ENCODE measurements at regions of chr3 and their contacts with region 1.

Region 1: DNA sequence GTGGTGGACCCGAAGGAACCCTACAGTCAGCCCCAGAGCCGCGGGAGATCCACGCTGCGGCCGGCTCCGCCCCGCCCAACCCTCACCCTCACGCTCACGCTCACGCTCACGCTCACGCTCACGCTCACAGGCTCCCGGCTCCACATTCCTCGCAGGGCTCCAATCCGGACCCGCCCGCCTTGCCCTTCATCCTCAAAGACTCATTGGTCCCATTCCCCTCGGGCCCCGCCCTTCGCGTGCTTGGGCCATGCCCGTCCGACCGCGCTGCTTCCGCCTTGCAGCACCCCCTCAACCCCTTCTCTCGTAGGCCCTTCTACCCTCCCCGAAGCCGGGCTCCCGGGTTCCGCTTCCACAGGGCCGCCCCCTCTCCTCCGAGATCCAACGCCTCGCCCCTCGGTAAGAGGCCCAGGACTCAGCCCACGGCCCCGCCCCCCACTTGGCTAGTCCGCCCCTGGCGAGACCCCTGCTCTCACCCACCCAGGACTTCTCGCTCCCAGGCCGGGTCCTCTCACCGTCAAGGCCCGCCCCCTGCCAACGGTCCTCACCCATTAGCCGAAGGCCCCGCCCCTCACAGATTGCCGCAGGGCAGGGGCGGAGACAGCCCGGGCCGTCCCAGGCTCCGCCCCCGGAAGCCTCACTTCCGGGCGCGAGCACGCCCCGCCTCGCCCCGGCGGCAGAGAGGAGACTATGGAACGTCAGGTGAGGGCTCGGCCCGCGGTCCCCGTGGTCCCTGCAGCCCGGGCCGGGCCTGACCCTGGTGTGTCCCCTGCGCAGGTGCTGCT is at the start of gene APEH:
- DNase-seq: peak; percentile 97
- H3K4me3 Mint-ChIP-seq: peak within 1 kb of the TSS; percentile 91
- H3K27ac Mint-ChIP-seq: peak within 1 kb of the TSS; percentile 97
- H3K4me1 Mint-ChIP-seq: peaks cover 16% of the 10 kb centered on the region
- H3K27me3 Mint-ChIP-seq: no peaks in the 10 kb centered on the region
- total RNA-seq, gene APEH: 111 and 113 TPM in 2 replicates

Region 2: GRCh38 chr3:49469936-49470713 is 203.8 kb before region 1 on chr3 and contains the start of gene DAG1:
- intact Hi-C with region 1: loop called (anchors 5 kb)
- DNase-seq: peak; percentile 94
- H3K4me3 Mint-ChIP-seq: peak within 1 kb of the TSS; percentile 87
- H3K27ac Mint-ChIP-seq: peak within 1 kb of the TSS; percentile 84
- H3K4me1 Mint-ChIP-seq: peaks cover 18% of the 10 kb centered on the region
- H3K27me3 Mint-ChIP-seq: no peaks in the 10 kb centered on the region
- total RNA-seq, gene DAG1: 17.0 and 25.9 TPM in 2 replicates

Region 3: GRCh38 chr3:49539659-49540560 is 134.0 kb before region 1 on chr3:
- intact Hi-C with region 1: loop called (anchors 1 kb)
- DNase-seq: peak; percentile 86
- H3K4me3 Mint-ChIP-seq: peak overlapping the region; percentile 68
- H3K27ac Mint-ChIP-seq: no peak overlapping the region
- H3K4me1 Mint-ChIP-seq: peaks cover 5% of the 10 kb centered on the region
- H3K27me3 Mint-ChIP-seq: peaks cover 17% of the 10 kb centered on the region

Region 4: GRCh38 chr3:49689046-49689907 is 15.4 kb after region 1 on chr3 and contains the starts of genes MST1 and RNF123:
- intact Hi-C with region 1: loop called (anchors 1 kb)
- DNase-seq: peak; percentile 90
- H3K4me3 Mint-ChIP-seq: peak within 1 kb of the TSS; percentile 96
- H3K27ac Mint-ChIP-seq: peak within 1 kb of the TSS; percentile 94
- H3K4me1 Mint-ChIP-seq: peaks cover 18% of the 10 kb centered on the region
- H3K27me3 Mint-ChIP-seq: no peaks in the 10 kb centered on the region
- total RNA-seq, gene MST1: 8.3 and 11.1 TPM in 2 replicates
- total RNA-seq, gene RNF123: 43.0 and 45.1 TPM in 2 replicates

Region 5: DNA sequence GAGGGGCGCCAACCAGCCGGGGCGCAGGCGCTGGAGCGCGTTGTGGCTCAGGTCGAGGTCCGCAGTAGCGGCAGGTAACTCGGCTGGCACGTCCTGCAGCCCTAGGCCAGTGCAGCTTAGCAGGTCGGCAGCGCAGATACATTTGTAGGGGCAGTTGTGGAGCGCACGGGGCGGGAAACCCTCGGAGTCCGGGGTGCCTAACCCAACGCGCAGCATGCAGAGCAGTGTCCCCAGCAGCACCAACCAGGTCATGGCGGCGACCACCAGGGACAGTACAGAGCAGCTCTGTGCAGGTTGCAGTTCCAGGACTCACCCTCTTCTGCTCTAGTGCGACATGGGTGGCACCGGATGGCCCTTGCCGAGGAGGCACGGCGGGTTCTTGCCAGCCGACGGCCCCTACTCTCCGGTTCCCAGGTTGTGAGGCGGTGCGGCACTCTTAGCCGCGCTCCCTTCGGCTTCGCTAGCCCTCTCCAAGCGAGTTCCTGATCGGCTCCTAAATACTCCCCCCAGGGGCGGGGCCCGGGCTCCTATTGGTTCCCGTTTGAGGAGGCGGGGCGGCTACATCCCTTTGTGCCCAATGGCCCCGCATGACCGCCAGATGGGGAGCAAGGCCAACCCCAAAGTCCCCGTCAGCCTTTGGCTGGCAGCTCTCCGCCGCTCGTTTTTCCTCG is 45.4 kb after region 1 on chr3 and contains the start of gene AMIGO3:
- intact Hi-C with region 1: loop called (anchors 1 kb)
- DNase-seq: peak; percentile 90
- H3K4me3 Mint-ChIP-seq: peak within 1 kb of the TSS; percentile 80
- H3K27ac Mint-ChIP-seq: peak within 1 kb of the TSS; percentile 65
- H3K4me1 Mint-ChIP-seq: peaks cover 19% of the 10 kb centered on the region
- H3K27me3 Mint-ChIP-seq: no peaks in the 10 kb centered on the region
- total RNA-seq, gene AMIGO3: not detected in 2 replicates

Region 6: DNA sequence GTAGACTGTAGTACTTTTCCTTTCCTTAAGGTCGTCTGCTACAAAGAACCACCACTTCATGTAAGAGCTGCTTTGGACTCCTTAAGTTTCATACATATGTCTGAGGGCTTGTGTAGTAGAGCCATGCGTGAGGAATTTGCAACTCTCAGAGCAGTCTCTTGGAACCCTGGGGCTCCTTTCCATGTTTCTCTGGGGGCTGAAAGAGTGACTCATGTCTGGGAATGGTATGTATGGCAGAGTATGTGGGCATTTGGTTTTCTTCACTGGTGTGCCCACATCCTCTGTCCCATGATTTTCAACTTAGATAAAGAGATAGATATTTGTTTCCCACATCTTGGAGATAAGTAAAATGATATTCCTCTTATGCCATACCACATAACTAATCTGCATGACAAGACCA is 394.2 kb after region 1 on chr3:
- intact Hi-C with region 1: no loop called
- DNase-seq: no peak
- H3K4me3 Mint-ChIP-seq: no peak overlapping the region
- H3K27ac Mint-ChIP-seq: no peak overlapping the region
- H3K4me1 Mint-ChIP-seq: no peaks in the 10 kb centered on the region
- H3K27me3 Mint-ChIP-seq: no peaks in the 10 kb centered on the region

Measured in activated T-helper 2 cell treated with anti-CD3 and anti-CD28 coated beads, Interferon-gamma antibody, Interleukin-2, Interleukin-4, amounts not matched to agents 10 μg/mL and 5 μg/mL and 100 μg/mL, durations not matched to agents 14 hours and 24 hours and 36 hours (primary cell).